GM12878 (cell line): ENCODE measurements at regions of chr17 and their contacts with region 1.

Region 1: DNA sequence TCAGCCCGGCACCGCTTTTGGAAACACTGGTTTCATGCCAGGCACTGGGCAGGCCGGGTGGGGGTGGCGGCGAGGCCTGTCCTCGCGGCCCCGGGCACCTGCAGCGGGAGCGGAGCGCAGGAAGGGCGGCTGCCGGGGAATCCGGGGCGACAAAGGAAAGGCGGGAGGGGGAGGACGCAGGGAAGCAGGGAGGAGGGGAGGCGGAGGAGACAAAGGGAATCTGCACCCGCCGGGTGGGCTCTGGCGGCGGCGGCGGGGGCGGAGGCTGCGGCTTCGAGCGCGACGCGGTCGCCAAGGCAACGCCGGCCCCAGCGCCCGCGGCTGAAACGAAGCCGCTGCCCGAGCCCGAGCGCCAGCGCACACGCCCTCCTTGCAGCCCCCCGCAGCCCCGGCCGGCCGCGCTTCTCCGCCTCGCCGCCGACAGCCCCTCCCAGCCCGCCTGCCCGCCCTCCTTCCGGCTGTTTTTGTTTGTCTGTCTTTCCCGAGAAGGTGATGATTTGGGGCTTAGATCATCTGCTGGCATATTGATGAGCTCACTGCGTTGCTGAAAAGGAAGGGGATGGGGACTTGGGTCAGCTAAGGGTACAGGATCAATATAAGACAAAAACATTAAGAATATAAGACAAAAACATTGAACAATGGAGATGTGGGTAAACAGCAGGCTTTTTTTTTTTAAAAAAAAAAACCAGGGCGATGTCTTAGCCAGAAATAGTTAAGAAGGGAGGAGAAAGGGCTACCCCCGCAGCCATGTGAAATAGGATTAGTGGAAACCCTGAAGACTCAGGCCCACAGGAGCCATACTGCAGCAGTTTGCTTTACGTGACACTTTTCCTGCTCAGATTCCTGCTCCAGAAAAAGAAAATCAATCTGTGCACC is 32.7 kb downstream of the CDK5R1 start:
- DNase-seq: no peak
- ATAC-seq: peak; percentile 38
- H3K4me3 ChIP-seq: peak overlapping the region; percentile 25; the same call in 1 of the 2 replicates
- H3K27ac ChIP-seq: peak overlapping the region; percentile 84
- H3K4me1 ChIP-seq: peaks cover 88% of the 10 kb centered on the region
- H3K27me3 ChIP-seq: no peaks in the 10 kb centered on the region
- CTCF ChIP-seq: no peak
- EP300 ChIP-seq: no peak
- POLR2A ChIP-seq: peak; percentile 61; the same call in 1 of the 2 replicates
- RAD21 ChIP-seq: no peak

Region 2: GRCh38 chr17:32319548-32319905 is 199.9 kb before region 1 on chr17:
- CTCF ChIA-PET with region 1: no interaction called
- POLR2A ChIA-PET with region 1: no interaction called
- RAD21 ChIA-PET with region 1: no interaction called
- SMC1A ChIA-PET with region 1: no interaction called
- in situ Hi-C with region 1: no loop called
- intact Hi-C with region 1: no loop called
- DNase-seq: peak; percentile 55
- ATAC-seq: peak; percentile 89
- H3K4me3 ChIP-seq: no peak overlapping the region
- H3K27ac ChIP-seq: no peak overlapping the region
- H3K4me1 ChIP-seq: peaks cover 7% of the 10 kb centered on the region
- H3K27me3 ChIP-seq: peaks cover 0 to 2% of the 10 kb centered on the region in 2 experiments; a peak in 3 of 4 replicates
- CTCF ChIP-seq: peak; percentile 96 to 99 (median 97); a peak in 5 of 6 replicates
- EP300 ChIP-seq: 0 out of 4 replicates have a peak, but pooled peaks of 1 of the 2 experiments have one; percentile 20
- POLR2A ChIP-seq: no peak
- RAD21 ChIP-seq: peak; percentile 92

Region 3: GRCh38 chr17:32386844-32387243 is 132.6 kb before region 1 on chr17:
- CTCF ChIA-PET with region 1: no interaction called
- POLR2A ChIA-PET with region 1: no interaction called
- RAD21 ChIA-PET with region 1: no interaction called
- SMC1A ChIA-PET with region 1: no interaction called
- in situ Hi-C with region 1: no loop called
- intact Hi-C with region 1: no loop called
- DNase-seq: no peak
- ATAC-seq: no peak
- H3K4me3 ChIP-seq: no peak overlapping the region
- H3K27ac ChIP-seq: no peak overlapping the region
- H3K4me1 ChIP-seq: no peaks in the 10 kb centered on the region
- H3K27me3 ChIP-seq: no peaks in the 10 kb centered on the region
- CTCF ChIP-seq: no peak
- EP300 ChIP-seq: no peak
- POLR2A ChIP-seq: no peak
- RAD21 ChIP-seq: no peak

Region 4: DNA sequence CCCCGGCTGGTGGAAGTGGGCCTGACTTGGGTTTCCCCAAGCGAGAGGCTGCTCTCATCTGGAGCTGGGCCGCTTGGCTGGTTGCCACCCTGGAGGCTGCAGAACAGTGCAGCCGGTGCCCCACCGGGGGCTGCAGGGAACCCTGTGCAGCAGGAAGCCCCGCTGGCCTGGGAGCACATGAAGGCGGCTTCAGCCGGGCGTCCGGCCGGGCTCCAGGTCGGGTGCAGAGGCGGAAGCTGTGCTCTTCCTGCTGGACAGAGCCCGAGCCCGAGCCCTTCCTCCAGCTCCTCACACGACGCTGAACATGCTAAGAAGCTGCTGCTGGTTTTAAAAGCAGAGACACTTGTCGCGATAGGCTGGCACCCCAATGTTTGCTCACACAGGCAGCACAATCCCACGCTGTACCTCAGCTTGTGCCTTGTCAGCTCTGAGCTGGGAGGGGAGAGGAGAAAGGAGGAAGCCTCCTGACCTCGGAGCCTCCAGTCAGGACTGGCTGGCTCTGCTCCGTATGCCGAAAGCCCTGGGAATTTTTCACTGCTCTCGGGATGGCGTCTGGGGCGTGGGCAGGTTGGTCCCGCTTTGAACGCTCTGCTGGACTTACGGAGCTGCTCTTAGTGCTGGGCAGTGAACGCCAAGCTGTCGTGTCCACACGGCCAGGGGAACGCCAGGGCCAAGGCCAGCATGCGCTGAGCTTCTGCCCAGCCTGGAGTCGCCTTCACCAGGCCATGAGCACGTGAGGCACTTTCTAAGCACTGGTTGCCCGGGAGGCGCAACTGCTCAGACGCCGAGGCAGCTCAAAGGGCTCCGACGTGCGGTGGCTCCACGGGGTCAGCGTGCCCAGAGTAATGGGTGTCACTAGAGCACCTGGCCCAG is 23.9 kb before region 1 on chr17:
- CTCF ChIA-PET with region 1: interaction called, 83 read pairs
- POLR2A ChIA-PET with region 1: interaction called, 308 read pairs
- RAD21 ChIA-PET with region 1: interaction called, 543 read pairs
- SMC1A ChIA-PET with region 1: interaction called, 286 read pairs
- in situ Hi-C with region 1: no loop called
- intact Hi-C with region 1: loop called (anchors 1 kb)
- DNase-seq: no peak
- ATAC-seq: peak; percentile 49
- H3K4me3 ChIP-seq: no peak overlapping the region
- H3K27ac ChIP-seq: no peak overlapping the region
- H3K4me1 ChIP-seq: peaks cover 29% of the 10 kb centered on the region
- H3K27me3 ChIP-seq: no peaks in the 10 kb centered on the region
- CTCF ChIP-seq: no peak
- EP300 ChIP-seq: no peak
- POLR2A ChIP-seq: no peak
- RAD21 ChIP-seq: no peak

Region 5: DNA sequence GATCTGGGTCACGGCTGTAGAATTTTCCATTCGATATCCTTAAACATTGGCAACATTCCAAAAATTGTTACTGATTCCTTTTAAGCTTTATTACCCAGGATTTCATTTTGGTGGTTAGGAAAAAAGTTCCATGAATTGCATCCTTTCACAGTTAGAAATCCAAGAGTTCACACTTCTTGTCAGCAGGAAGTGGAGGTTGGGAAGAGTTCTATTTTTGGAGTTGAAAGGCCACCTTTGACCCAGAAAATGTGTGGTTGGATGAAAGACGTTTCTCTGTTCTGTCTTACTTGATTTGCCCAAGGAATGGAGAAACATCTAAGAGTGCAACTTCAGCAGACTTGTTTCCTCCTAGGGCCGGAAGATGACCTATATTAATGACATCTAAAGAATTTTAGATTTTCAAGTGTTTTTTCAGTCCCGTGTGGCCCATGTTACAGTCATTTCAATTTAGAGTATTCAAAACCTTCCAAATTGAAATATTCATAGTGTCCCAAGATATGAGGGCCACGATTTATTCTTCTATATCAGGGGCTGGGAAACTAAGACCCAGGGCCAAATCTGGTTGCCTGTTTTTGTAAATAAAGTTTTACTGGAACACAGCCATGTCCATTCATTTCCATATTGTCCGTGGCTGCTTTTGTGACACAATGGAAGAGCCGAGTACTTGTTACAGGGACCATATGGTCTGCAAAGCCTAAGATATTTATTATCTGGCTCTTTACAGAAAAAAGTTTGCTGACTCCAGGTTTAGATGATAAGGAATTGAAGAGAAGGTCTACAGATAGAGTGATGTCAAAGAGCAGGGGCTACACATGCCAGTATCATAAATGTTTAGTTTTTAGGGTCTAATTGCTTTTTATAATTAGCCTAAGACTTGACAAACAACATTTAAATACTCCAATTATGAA is 17.5 kb after region 1 on chr17:
- CTCF ChIA-PET with region 1: no interaction called
- POLR2A ChIA-PET with region 1: no interaction called
- RAD21 ChIA-PET with region 1: interaction called, 4 read pairs
- SMC1A ChIA-PET with region 1: interaction called, 29 read pairs
- in situ Hi-C with region 1: no loop called
- intact Hi-C with region 1: no loop called
- DNase-seq: no peak
- ATAC-seq: no peak
- H3K4me3 ChIP-seq: no peak overlapping the region
- H3K27ac ChIP-seq: no peak overlapping the region
- H3K4me1 ChIP-seq: no peaks in the 10 kb centered on the region
- H3K27me3 ChIP-seq: no peaks in the 10 kb centered on the region
- CTCF ChIP-seq: no peak
- EP300 ChIP-seq: no peak
- POLR2A ChIP-seq: no peak
- RAD21 ChIP-seq: no peak

Region 6: GRCh38 chr17:32558997-32559650 is 39.7 kb after region 1 on chr17:
- CTCF ChIA-PET with region 1: interaction called, 19 read pairs
- POLR2A ChIA-PET with region 1: interaction called, 36 read pairs
- RAD21 ChIA-PET with region 1: interaction called, 77 read pairs
- SMC1A ChIA-PET with region 1: interaction called, 237 read pairs
- in situ Hi-C with region 1: no loop called
- intact Hi-C with region 1: loop called (anchors 2 kb)
- DNase-seq: peak; percentile 92
- ATAC-seq: peak; percentile 97
- H3K4me3 ChIP-seq: no peak overlapping the region
- H3K27ac ChIP-seq: peak overlapping the region; percentile 94
- H3K4me1 ChIP-seq: peaks cover 43% of the 10 kb centered on the region
- H3K27me3 ChIP-seq: no peaks in the 10 kb centered on the region
- CTCF ChIP-seq: no peak
- EP300 ChIP-seq: no peak
- POLR2A ChIP-seq: no peak; the same call in 1 of the 2 replicates
- RAD21 ChIP-seq: no peak

Region 7: DNA sequence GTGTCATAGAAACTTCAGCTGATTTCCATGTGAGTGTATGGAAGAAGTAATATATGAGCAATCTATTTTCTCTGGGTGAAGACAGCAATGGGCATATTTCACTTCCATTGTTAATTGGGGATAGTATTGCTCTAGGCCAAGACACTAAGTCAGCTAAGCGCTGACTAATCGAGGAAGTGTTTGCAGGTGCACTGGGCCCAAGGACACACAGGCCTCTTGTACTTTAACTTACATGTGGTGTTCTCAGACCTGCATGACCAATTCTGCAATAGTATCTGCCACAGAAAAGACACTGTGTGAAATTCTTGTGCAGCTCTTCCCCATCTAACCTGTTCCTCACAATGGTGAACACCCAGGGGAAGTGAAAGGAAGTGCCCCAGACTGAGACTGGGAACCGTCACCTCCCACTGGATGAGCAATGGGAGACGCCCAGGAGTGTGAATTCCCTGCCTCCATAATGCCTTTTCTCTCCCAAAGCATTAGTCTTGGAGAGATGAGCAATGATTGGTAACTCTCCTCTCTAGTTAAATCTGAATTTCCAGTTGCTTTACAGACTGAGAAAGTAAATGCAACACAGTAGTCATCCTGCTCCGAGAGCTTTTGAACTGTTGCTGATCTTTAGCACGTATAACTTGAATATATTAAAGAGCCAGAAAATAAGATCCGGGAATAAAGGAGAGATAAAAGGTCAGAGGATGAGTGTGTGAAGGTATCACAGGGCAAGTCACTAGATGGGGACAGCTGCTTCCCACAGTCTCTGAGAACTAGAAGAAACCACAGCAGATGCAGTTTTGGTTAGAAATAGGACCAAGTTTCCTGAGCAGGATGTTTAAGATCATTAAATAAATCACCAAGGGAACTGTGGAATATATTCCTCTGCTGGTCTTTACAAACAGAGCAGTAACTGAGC is 50.0 kb after region 1 on chr17:
- CTCF ChIA-PET with region 1: interaction called, 19 read pairs
- POLR2A ChIA-PET with region 1: interaction called, 22 read pairs
- RAD21 ChIA-PET with region 1: interaction called, 36 read pairs
- SMC1A ChIA-PET with region 1: interaction called, 237 read pairs
- in situ Hi-C with region 1: no loop called
- intact Hi-C with region 1: loop called (anchors 1 kb)
- DNase-seq: peak; percentile 90
- ATAC-seq: peak; percentile 81
- H3K4me3 ChIP-seq: no peak overlapping the region
- H3K27ac ChIP-seq: peak overlapping the region; percentile 99
- H3K4me1 ChIP-seq: peaks cover 51% of the 10 kb centered on the region
- H3K27me3 ChIP-seq: no peaks in the 10 kb centered on the region
- CTCF ChIP-seq: 0 out of 6 replicates have a peak, but pooled peaks of 1 of the 3 experiments have one; percentile 5
- EP300 ChIP-seq: peak; percentile 36 to 50; a peak in 3 of 4 replicates
- POLR2A ChIP-seq: no peak
- RAD21 ChIP-seq: no peak; the same call in none of the 2 replicates